Breast epithelium (tissue), 4 donors: ENCODE measurements at regions of chr10 and their contacts with region 1.

Region 1: GRCh38 chr10:113273181-113274163 is 279.4 kb upstream of the HABP2 start:
- DNase-seq: no peak
- H3K4me3 ChIP-seq: peak overlapping the region in 1 of 3 donors; percentile 22
- H3K27ac ChIP-seq: peak overlapping the region in 1 of 2 donors; percentile 77
- H3K4me1 ChIP-seq: no peaks in the 10 kb centered on the region
- H3K27me3 ChIP-seq: no peaks in the 10 kb centered on the region
- CTCF ChIP-seq: no peak
- POLR2A ChIP-seq: no peak

Region 2: GRCh38 chr10:112510384-112510783 is 763.1 kb before region 1 on chr10:
- intact Hi-C with region 1: loop called (anchors 5 kb)
- DNase-seq: no peak
- H3K4me3 ChIP-seq: no peak overlapping the region
- H3K27ac ChIP-seq: no peak overlapping the region
- H3K4me1 ChIP-seq: no peaks in the 10 kb centered on the region
- H3K27me3 ChIP-seq: no peaks in the 10 kb centered on the region
- CTCF ChIP-seq: no peak
- POLR2A ChIP-seq: no peak

Region 3: DNA sequence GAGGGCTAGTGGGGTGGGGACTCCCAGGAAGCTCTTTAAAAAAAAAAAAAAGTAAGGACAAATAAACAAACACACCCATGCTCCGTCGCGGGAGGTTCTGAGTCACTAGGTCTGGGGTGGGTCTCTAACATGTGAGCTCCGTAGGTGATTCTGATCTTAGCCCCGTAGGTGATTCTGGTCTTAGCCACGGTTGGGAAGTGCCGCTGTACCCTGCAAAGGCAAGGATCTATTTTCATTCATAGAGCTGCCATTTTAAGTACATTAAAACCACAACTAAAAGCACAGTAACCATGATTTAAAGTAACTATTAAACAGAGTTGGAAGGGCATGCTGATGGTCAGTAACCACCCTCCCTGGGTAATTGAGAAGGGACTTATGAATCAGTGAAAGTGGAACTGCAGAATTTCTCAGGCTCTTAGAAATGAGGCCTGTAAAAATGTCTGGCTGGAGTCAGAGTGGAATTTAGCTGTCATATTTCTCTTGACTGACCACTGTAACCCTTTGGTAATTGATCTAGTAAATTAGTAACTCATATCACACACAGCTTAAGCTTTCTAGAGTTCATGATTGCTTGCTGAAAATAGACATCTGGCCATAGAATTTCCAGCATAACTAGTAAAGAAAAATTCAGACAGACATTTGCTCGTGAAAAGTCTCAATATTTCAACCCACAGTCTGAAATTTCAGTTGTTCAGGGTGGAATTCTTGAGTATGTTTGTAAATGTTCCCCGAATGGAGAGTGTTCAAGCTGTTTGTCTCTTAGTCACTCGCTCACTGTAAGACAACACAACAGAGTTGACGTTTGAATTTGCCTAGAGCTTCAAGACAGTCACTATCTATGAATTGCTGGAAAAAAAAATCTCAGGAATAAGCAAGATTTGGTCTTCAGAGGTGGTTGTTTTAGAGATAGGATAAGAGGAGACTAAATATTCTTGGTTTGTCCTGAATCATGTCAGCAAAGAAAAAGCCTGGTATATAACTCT is 357.6 kb before region 1 on chr10:
- intact Hi-C with region 1: no loop called
- DNase-seq: no peak
- H3K4me3 ChIP-seq: no peak overlapping the region
- H3K27ac ChIP-seq: no peak overlapping the region
- H3K4me1 ChIP-seq: no peaks in the 10 kb centered on the region
- H3K27me3 ChIP-seq: no peaks in the 10 kb centered on the region
- CTCF ChIP-seq: no peak
- POLR2A ChIP-seq: no peak

Region 4: DNA sequence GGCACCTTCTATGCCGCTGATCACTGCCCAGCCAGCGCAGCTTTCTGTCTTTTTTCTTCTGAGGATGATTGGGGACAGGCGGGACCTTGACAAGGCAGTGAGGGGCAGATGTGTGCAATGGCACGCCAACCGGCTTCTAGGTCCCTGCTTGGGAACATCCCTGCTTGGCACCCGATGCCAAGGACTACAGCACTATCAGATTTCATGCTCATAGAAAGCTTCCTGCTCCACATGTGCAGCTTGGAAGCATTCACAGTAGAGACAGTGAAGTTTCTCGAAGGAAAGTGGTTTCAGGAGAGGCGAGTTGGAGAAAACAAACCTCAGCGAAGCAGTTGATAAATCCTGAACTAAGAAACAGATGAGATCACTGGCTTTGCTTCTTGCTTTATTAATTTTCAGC is 11.8 kb after region 1 on chr10:
- intact Hi-C with region 1: no loop called
- DNase-seq: no peak
- H3K4me3 ChIP-seq: no peak overlapping the region
- H3K27ac ChIP-seq: no peak overlapping the region
- H3K4me1 ChIP-seq: no peaks in the 10 kb centered on the region
- H3K27me3 ChIP-seq: no peaks in the 10 kb centered on the region
- CTCF ChIP-seq: no peak
- POLR2A ChIP-seq: no peak